Heart left ventricle (tissue), 16 donors: ENCODE measurements at regions of chr5 and their contacts with region 1.

Region 1: DNA sequence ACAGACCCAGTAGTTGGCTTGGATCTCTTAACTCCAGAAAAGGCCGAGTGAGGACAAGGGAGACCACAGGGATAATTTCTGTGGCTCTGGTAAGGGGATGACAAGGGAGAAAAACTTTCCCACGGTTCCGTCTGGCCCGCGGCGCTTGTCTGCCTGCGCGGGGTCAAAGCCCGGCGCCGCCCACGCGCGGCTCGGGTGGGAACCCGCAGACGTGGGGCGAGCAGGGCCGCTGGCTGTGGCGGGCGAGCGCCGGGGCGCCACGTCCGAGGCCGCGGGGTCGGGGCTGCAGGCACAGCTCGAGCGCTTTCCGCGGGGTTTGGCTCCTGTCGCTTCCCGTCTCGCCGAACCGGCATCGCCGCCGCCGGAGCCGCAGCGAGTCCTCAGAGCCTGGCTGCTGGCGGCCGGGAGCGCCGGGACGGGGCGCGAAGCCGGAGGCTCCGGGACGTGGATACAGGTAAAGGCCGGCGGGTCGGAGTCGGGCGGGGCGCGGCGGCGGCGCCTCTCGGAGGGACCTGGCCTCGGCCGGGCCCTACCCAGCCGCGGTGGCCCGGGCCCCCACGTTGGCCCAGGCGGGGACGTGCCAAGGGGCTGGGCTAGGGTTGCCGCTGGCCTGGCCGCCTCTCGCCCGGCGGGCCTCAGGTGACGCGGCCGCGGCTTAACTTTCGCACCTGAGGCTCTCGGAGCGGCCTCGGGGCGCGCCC is at the start of gene RNF180:
- DNase-seq: peak; percentile 70 to 75 (median 72)
- ATAC-seq: peak; percentile 56 to 94 (median 88)
- H3K4me3 ChIP-seq: peak within 1 kb of the TSS; percentile 60 to 92 (median 83)
- H3K27ac ChIP-seq: peak within 1 kb of the TSS; percentile 75 to 94 (median 84)
- H3K4me1 ChIP-seq: peaks cover 0 to 45% (median 14%) of the 10 kb centered on the region in 12 donors
- H3K27me3 ChIP-seq: peaks cover 0 to 19% (median 0%) of the 10 kb centered on the region in 9 donors
- CTCF ChIP-seq: no peak
- POLR2A ChIP-seq: peak in 1 of 2 donors; percentile 20
- total RNA-seq, gene RNF180: 10.5 to 20.4 (median 13.1) TPM

Region 2: DNA sequence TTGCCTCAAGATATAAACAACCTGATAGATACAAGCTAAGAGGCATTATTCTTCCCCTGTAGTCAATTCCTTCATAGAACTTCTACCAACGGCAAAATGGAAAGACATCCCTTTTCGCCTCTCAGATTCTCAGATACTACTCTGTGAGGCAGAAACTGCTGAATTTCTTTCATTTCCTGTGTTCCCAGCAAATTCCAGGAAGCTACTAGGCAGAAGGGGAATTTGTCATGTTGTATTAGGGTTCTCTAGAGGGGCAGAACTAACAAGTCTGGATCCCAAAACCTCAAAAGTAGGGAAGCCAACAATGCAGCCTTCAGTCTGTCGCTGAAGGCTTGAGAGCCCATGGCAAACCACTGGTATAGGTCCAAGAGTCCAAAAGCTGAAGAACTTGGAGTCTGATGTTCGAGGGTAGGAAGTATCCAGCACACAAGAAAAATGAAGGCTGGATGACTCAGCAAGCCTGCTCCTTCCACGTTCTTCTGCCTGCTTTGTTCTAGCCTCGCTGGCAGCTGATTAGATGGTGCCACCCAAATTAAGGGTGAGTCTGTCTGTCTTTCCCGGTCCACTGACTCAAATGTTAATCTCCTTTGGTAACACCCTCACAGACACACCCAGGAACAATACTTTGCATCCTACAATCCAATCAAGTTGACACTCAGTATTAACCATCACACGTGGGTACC is 15.2 kb after region 1 on chr5:
- intact Hi-C with region 1: loop called in 1 of 10 experiments (anchors 1 kb)
- DNase-seq: no peak
- ATAC-seq: peak in 3 of 4 donors; percentile 45 to 67 (median 52)
- H3K4me3 ChIP-seq: peak overlapping the region in 2 of 12 donors; percentile 14 to 22
- H3K27ac ChIP-seq: peak overlapping the region in 11 of 12 donors; percentile 21 to 68 (median 43)
- H3K4me1 ChIP-seq: peaks cover 0 to 36% (median 9%) of the 10 kb centered on the region in 12 donors
- H3K27me3 ChIP-seq: no peaks in the 10 kb centered on the region
- CTCF ChIP-seq: no peak
- POLR2A ChIP-seq: no peak

Region 3: DNA sequence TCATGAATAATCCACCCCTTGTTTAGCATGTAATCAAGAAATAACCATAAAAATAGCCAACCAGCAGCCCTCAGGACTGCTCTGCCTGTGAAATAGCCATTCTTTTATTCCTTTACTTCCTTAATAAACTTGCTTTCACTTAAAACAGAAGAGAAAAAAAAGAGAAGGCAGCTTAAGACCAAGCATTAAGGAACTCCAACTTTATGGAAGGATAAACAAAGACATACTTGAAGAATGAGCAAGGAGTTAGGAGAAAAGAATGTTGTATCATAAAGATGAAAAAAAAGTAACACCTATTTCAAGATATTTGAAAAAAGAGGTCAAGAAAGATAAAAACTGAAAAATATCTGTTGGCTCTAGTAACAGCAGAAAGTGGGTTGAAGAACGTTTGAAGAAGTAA is 107.6 kb after region 1 on chr5:
- intact Hi-C with region 1: no loop called
- DNase-seq: no peak
- ATAC-seq: no peak
- H3K4me3 ChIP-seq: no peak overlapping the region
- H3K27ac ChIP-seq: no peak overlapping the region
- H3K4me1 ChIP-seq: peaks cover 0 to 22% (median 7%) of the 10 kb centered on the region in 12 donors
- H3K27me3 ChIP-seq: no peaks in the 10 kb centered on the region
- CTCF ChIP-seq: no peak
- POLR2A ChIP-seq: no peak